PC-3 (cell line): ENCODE measurements at regions of chr1 and their contacts with region 1.

Region 1: DNA sequence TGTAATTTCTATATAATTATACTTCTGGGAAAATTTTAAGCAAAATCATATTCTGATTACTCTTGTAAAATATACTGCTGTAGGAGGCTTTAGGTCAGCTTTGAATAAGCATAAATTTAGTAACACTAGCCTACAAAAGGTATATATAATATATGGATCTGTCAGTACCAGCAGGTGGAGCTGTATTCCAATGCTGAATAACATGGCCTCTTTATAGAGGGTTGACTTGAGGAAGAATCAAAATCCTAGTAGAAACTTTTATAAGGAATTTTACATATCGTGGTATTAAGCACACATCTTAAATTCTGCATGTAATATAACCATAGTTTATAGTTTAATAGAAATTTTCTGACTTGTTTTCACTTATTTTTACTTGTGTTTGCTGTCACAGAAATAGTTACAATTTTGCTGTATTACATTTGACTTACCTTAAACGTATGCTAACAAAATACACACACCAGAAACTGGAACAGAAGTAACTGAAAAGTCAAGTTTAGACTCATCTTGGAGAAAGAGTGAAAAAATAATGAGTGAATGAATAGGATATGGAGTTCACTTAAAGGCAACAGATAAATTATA is 79.3 kb downstream of the HMCN1 start:
- DNase-seq: peak; percentile 73
- ATAC-seq: peak; percentile 84
- H3K4me3 ChIP-seq: no peak overlapping the region
- H3K27ac ChIP-seq: no peak overlapping the region
- H3K4me1 ChIP-seq: no peaks in the 10 kb centered on the region
- H3K27me3 ChIP-seq: no peaks in the 10 kb centered on the region
- CTCF ChIP-seq: peak; percentile 70

Region 2: GRCh38 chr1:185720633-185721272 is 92.7 kb before region 1 on chr1:
- CTCF ChIA-PET with region 1: interaction called, 3 read pairs
- POLR2A ChIA-PET with region 1: no interaction called
- intact Hi-C with region 1: loop called (anchors 2 kb)
- DNase-seq: peak; percentile 49
- ATAC-seq: peak; percentile 35
- H3K4me3 ChIP-seq: no peak overlapping the region
- H3K27ac ChIP-seq: no peak overlapping the region
- H3K4me1 ChIP-seq: peaks cover 21% of the 10 kb centered on the region
- H3K27me3 ChIP-seq: no peaks in the 10 kb centered on the region
- CTCF ChIP-seq: peak; percentile 72

Region 3: DNA sequence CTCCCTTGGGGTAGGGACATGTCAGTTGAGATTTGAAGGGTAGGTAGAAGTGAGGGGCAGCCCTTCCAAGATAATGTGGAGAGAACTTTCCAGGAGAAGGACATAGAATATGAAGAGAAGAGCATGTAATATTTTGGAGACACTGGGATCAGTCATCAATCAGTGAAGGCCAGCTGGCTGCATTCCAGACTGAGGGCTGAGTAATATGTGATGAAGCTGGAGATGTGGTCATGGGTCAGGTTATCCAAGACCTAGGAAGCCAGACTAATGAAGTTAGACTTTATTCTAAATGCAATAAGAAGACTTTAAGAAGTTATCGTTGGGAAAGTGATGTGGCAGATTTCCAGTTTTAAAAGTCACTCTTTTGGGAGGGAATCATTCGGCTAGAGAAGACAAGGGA is 182.7 kb after region 1 on chr1:
- CTCF ChIA-PET with region 1: no interaction called
- POLR2A ChIA-PET with region 1: no interaction called
- intact Hi-C with region 1: loop called (anchors 10 kb)
- DNase-seq: peak; percentile 92
- ATAC-seq: peak; percentile 85
- H3K4me3 ChIP-seq: no peak overlapping the region
- H3K27ac ChIP-seq: no peak overlapping the region
- H3K4me1 ChIP-seq: peaks cover 14% of the 10 kb centered on the region
- H3K27me3 ChIP-seq: no peaks in the 10 kb centered on the region
- CTCF ChIP-seq: no peak

Region 4: DNA sequence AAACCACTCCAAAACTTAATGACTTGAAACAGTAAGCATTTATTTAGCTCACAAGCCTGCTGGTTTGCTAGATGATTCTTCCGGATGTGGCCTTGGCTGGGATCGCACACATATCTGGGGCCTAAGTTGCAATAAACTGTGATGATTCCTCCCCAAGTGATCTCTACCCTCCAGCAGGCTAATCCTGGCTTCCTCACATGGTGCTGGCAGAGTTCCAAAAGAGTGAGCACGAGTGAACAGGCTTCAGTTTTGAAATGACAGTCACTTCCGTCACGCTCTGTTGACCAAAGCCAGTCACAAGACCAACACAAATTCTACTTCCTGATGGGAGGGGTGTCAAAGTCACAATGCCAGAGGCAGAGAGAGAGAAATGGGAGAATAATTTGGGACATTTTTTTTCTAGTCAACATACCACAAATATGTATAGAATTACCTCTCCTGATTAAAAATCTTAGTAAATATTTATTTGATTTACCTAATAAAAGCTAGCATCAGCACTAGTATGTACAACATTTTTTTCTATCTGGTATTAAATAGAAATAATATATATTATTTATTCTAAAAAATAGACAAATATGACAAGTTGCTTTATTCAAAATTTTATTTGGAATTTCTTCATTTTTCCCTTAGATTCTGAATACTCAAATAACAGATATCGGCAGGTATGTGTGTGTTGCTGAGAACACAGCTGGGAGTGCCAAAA is 268.9 kb after region 1 on chr1:
- CTCF ChIA-PET with region 1: no interaction called
- POLR2A ChIA-PET with region 1: no interaction called
- intact Hi-C with region 1: loop called (anchors 5 kb)
- DNase-seq: peak; percentile 96
- ATAC-seq: peak; percentile 96
- H3K4me3 ChIP-seq: no peak overlapping the region
- H3K27ac ChIP-seq: peak overlapping the region; percentile 60
- H3K4me1 ChIP-seq: peaks cover 23% of the 10 kb centered on the region
- H3K27me3 ChIP-seq: no peaks in the 10 kb centered on the region
- CTCF ChIP-seq: no peak

Region 5: DNA sequence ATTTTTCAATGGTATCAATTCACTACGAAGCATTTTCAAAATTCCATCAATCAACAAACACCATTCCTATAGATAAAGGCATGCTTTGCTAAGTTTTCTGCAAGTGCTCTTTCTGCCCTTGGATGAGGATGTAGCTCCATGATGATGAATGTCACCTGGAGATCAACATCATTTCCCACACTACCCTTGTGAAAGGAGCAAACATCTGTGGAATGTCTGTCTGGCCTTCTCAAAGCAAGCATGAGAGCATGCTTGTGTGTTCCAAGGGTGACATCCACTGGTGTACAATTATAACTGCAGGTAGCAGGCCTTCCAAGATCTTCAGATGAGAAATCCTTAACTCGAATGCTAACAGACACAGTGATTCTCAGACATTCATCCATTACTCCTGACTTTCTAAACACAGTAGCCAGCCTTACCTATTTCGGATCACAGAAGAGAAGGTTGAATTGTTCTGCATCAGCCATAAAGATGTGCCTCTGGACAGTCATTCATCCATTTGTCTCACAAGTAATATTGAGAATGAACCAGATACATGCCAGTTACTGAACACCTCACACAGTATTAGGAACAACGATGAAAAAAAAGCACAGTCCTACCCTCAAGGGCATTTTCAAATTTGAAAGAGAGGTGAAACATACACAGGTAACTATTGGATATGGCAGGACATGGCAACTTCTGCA is 399.2 kb after region 1 on chr1:
- CTCF ChIA-PET with region 1: no interaction called
- POLR2A ChIA-PET with region 1: no interaction called
- intact Hi-C with region 1: loop called (anchors 1 kb)
- DNase-seq: peak; percentile 82
- ATAC-seq: peak; percentile 82
- H3K4me3 ChIP-seq: no peak overlapping the region
- H3K27ac ChIP-seq: no peak overlapping the region
- H3K4me1 ChIP-seq: 0 out of 2 replicates have a peak, but pooled peaks cover 5% of the 10 kb centered on the region
- H3K27me3 ChIP-seq: no peaks in the 10 kb centered on the region
- CTCF ChIP-seq: peak; percentile 89